Activated naive CD4-positive, alpha-beta T cell treated with anti-CD3 and anti-CD28 coated beads, Interleukin-2, amount 10 ng/mL, durations not matched to agents 7 days and 5 days (primary cell): ENCODE measurements at regions of chr3 and their contacts with region 1.

Region 1: GRCh38 chr3:120245386-120245785 is 39.6 kb downstream of the GPR156 start:
- DNase-seq: no peak
- H3K4me3 Mint-ChIP-seq: no peak overlapping the region
- H3K27ac Mint-ChIP-seq: no peak overlapping the region
- H3K4me1 Mint-ChIP-seq: no peaks in the 10 kb centered on the region
- H3K27me3 Mint-ChIP-seq: peaks cover 22% of the 10 kb centered on the region

Region 2: DNA sequence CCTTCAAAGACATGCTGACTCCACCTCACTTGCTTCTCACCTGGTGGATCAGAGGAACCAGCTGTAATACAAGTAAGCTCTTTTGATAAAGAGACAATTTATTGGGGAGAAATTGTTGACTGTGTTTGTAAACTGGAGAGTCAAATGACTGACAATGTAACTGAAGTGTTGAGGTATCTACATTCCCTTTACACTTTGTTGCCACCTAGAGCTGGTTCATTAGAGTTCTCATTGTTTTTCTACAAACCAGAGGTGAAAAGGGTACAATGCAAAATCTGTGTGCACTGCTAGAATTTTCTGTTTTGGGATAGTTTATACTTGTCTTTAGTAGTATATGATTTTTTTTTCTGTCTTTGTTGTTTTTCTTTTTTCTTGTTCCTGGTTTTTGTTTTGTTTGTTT is 112.4 kb after region 1 on chr3:
- CTCF ChIA-PET with region 1: interaction called, 24 read pairs
- DNase-seq: no peak
- H3K4me3 Mint-ChIP-seq: no peak overlapping the region
- H3K27ac Mint-ChIP-seq: no peak overlapping the region
- H3K4me1 Mint-ChIP-seq: no peaks in the 10 kb centered on the region
- H3K27me3 Mint-ChIP-seq: peaks cover 36% of the 10 kb centered on the region

Region 3: DNA sequence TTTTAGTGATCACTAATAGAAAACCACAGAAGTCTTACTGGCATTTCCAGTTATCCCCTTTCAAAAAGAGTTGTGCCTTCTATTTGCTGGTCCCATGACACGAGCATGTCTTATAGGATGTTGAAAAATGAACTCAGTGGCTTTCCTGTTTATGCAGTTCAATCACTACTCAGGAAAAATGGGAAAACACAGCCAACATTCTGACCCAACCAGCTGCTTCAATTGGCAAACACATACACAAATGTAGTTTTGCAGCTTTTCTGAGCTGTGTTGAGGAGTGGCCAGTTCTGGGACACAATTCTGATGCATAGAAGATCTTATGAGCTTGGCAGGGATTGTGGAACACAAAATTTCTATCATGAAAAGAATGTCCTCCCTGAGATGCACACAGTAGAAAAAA is 165.2 kb after region 1 on chr3:
- CTCF ChIA-PET with region 1: interaction called, 123 read pairs
- DNase-seq: no peak
- H3K4me3 Mint-ChIP-seq: no peak overlapping the region
- H3K27ac Mint-ChIP-seq: no peak overlapping the region
- H3K4me1 Mint-ChIP-seq: no peaks in the 10 kb centered on the region
- H3K27me3 Mint-ChIP-seq: peaks cover 3% of the 10 kb centered on the region

Region 4: DNA sequence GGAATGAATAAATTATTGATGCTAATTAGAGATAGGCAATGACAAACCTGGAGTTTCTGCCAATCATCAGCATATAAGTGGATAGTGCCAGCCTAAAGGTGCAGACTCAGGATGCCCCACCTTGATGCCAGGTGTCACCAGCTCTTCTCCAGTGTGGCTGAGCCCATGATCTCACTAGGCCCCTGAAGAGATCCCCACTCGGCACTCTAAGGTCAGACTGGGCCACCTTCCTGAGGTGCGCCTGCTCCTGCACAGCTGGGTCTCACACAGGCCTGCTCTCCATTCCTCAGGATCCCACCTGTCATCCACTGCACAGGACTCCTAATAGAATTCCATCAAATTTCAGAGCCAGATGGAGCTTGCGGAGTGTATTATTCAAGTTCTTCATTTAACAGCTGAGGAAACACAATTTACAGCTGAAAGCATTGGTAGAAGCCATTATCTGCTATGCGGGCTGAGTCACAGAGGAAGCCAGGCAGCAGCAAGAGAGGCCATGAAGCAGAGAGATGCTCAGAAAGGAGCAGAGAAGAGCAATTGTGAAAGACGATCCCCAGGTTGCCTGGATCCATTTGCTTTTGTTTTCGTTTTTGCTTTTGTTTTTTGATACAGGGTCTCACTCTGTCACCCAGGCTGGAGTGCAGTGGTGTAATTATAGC is 230.5 kb after region 1 on chr3:
- CTCF ChIA-PET with region 1: no interaction called
- DNase-seq: no peak
- H3K4me3 Mint-ChIP-seq: no peak overlapping the region
- H3K27ac Mint-ChIP-seq: no peak overlapping the region
- H3K4me1 Mint-ChIP-seq: no peaks in the 10 kb centered on the region
- H3K27me3 Mint-ChIP-seq: peaks cover 19% of the 10 kb centered on the region

Region 5: DNA sequence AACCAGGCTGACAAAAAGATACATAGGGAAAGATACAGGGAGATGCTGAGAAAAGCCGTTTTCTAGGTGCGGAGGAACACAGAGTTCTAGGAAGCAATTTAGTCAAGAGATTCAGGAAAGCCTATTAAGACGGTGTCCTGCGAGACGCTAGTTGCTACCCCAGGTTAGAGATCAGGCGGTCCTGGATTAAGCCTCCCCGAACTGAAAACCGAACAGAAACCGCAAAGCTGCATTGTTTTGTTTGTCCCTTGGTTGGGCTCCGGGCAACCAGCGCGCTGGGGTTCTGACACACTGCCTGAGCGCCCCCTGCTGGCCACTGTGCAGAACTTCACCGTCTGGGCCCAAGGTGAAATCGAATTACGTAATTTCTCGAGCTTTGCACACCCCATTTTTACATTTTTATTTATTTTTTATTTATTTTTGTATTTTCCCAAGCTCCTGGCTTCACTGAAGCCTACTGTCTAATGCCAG is 313.4 kb after region 1 on chr3:
- CTCF ChIA-PET with region 1: interaction called, 24 read pairs
- DNase-seq: peak; percentile 91
- H3K4me3 Mint-ChIP-seq: peak overlapping the region; percentile 65
- H3K27ac Mint-ChIP-seq: no peak overlapping the region
- H3K4me1 Mint-ChIP-seq: peaks cover 17% of the 10 kb centered on the region
- H3K27me3 Mint-ChIP-seq: peaks cover 12% of the 10 kb centered on the region